CD4-positive, alpha-beta T cell (primary cell): ENCODE measurements at regions of chr16 and their contacts with region 1.

Region 1: GRCh38 chr16:53130159-53131049 is 75.6 kb downstream of the CHD9 start:
- DNase-seq: peak; percentile 86 to 97 (median 93)
- ATAC-seq: peak; percentile 91
- H3K4me3 ChIP-seq: peak overlapping the region; percentile 92
- H3K4me3 Mint-ChIP-seq: peak overlapping the region; percentile 91
- H3K27ac ChIP-seq: peak overlapping the region; percentile 63 to 71
- H3K27ac Mint-ChIP-seq: peak overlapping the region; percentile 92
- H3K4me1 ChIP-seq: peaks cover 13% of the 10 kb centered on the region
- H3K4me1 Mint-ChIP-seq: peaks cover 12% of the 10 kb centered on the region
- H3K27me3 ChIP-seq: no peaks in the 10 kb centered on the region
- H3K27me3 Mint-ChIP-seq: no peaks in the 10 kb centered on the region
- CTCF ChIP-seq: no peak

Region 2: GRCh38 chr16:53159781-53160436 is 29.5 kb after region 1 on chr16:
- CTCF ChIA-PET with region 1: no interaction called
- POLR2A ChIA-PET with region 1: no interaction called
- intact Hi-C with region 1: loop called in 1 of 2 experiments (anchors 2 kb)
- DNase-seq: peak in 4 of 14 experiments; percentile 31 to 76 (median 70)
- ATAC-seq: peak; percentile 68
- H3K4me3 ChIP-seq: no peak overlapping the region
- H3K4me3 Mint-ChIP-seq: no peak overlapping the region
- H3K27ac ChIP-seq: no peak overlapping the region
- H3K27ac Mint-ChIP-seq: no peak overlapping the region
- H3K4me1 ChIP-seq: no peaks in the 10 kb centered on the region
- H3K4me1 Mint-ChIP-seq: peaks cover 6% of the 10 kb centered on the region
- H3K27me3 ChIP-seq: no peaks in the 10 kb centered on the region
- H3K27me3 Mint-ChIP-seq: no peaks in the 10 kb centered on the region
- CTCF ChIP-seq: peak; percentile 80

Region 3: DNA sequence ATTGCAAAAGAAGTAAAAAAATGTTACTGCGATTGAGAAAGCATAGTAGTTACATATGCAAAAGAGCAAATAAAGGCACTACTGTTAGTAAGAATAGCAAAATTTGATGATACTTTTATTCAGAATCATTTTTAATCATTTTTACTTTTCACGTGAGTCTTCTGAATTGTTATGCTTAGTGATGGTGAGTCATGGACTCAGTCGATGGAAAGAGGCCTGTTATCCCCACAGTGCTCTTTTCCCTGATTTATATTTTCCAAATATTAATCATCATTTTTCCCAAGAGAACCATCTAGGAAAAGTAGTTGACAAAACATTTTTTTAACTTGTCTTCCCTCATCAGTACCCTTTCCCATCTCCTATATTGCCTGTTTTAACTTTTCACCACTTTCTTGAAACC is 105.4 kb after region 1 on chr16:
- CTCF ChIA-PET with region 1: no interaction called
- POLR2A ChIA-PET with region 1: no interaction called
- intact Hi-C with region 1: no loop called
- DNase-seq: no peak
- ATAC-seq: no peak
- H3K4me3 ChIP-seq: no peak overlapping the region
- H3K4me3 Mint-ChIP-seq: no peak overlapping the region
- H3K27ac ChIP-seq: no peak overlapping the region
- H3K27ac Mint-ChIP-seq: no peak overlapping the region
- H3K4me1 ChIP-seq: no peaks in the 10 kb centered on the region
- H3K4me1 Mint-ChIP-seq: no peaks in the 10 kb centered on the region
- H3K27me3 ChIP-seq: no peaks in the 10 kb centered on the region
- H3K27me3 Mint-ChIP-seq: no peaks in the 10 kb centered on the region
- CTCF ChIP-seq: no peak

Region 4: GRCh38 chr16:53372992-53373871 is 242.8 kb after region 1 on chr16:
- CTCF ChIA-PET with region 1: no interaction called
- POLR2A ChIA-PET with region 1: no interaction called
- intact Hi-C with region 1: loop called in 1 of 2 experiments (anchors 2 kb)
- DNase-seq: peak; percentile 65 to 94 (median 82)
- ATAC-seq: peak; percentile 96
- H3K4me3 ChIP-seq: peak overlapping the region; percentile 72
- H3K4me3 Mint-ChIP-seq: no peak overlapping the region
- H3K27ac ChIP-seq: no peak overlapping the region
- H3K27ac Mint-ChIP-seq: peak overlapping the region; percentile 59
- H3K4me1 ChIP-seq: peaks cover 13% of the 10 kb centered on the region
- H3K4me1 Mint-ChIP-seq: peaks cover 35% of the 10 kb centered on the region
- H3K27me3 ChIP-seq: no peaks in the 10 kb centered on the region
- H3K27me3 Mint-ChIP-seq: no peaks in the 10 kb centered on the region
- CTCF ChIP-seq: no peak

Region 5: GRCh38 chr16:53503270-53503923 is 373.0 kb after region 1 on chr16:
- CTCF ChIA-PET with region 1: no interaction called
- POLR2A ChIA-PET with region 1: interaction called, 3 read pairs
- intact Hi-C with region 1: loop called in 1 of 2 experiments (anchors 5 kb)
- DNase-seq: peak; percentile 97 to 100 (median 100)
- ATAC-seq: peak; percentile 88
- H3K4me3 ChIP-seq: peak overlapping the region; percentile 76
- H3K4me3 Mint-ChIP-seq: peak overlapping the region; percentile 93
- H3K27ac ChIP-seq: peak overlapping the region; percentile 76 to 84
- H3K27ac Mint-ChIP-seq: peak overlapping the region; percentile 86
- H3K4me1 ChIP-seq: peaks cover 44% of the 10 kb centered on the region
- H3K4me1 Mint-ChIP-seq: peaks cover 65% of the 10 kb centered on the region
- H3K27me3 ChIP-seq: no peaks in the 10 kb centered on the region
- H3K27me3 Mint-ChIP-seq: no peaks in the 10 kb centered on the region
- CTCF ChIP-seq: no peak

Region 6: DNA sequence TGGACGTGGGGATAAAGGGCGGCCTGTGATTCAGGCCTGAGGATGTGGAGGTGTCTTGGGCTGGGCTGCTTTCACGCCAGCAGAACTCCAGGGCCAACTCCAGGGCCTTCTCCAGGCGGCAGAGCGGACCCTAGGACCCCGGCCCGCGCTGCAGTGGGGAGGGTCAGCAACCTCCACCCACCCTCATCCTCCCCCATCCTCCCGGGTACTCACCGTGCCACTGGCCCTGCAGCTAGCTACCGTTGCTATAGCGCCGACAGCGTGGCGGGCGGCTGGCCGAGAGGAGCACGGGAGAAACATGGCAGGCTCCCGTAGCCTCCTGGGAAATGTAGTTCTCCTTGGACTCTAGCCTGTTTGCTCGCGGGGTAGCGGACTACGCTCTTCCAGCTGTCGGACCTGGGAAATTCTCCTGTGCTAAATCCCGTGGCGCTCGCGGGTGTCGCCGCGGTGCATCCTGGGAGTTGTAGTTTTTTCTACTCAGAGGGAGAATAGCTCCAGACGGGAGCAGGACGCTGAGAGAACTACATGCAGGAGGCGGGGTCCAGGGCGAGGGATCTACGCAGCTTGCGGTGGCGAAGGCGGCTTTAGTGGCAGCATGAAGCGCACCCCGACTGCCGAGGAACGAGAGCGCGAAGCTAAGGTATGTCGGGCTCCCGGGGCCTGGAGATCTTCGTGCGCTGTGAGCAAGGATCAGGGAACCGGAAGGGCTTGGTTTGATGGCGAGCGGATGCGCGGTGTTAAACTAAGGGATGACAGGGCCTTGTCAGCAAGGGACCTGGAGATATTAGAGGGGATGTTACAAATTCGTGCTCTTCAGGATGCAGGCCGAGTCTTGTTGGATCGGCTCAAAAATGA is 573.4 kb after region 1 on chr16 and contains the starts of genes FTO and RPGRIP1L:
- CTCF ChIA-PET with region 1: no interaction called
- POLR2A ChIA-PET with region 1: interaction called, 3 read pairs
- intact Hi-C with region 1: loop called in 1 of 2 experiments (anchors 5 kb)
- DNase-seq: peak; percentile 90 to 99 (median 93)
- ATAC-seq: peak; percentile 89
- H3K4me3 ChIP-seq: peak within 1 kb of the TSS; percentile 87
- H3K4me3 Mint-ChIP-seq: peak within 1 kb of the TSS; percentile 97
- H3K27ac ChIP-seq: peak within 1 kb of the TSS; percentile 53 to 63
- H3K27ac Mint-ChIP-seq: peak within 1 kb of the TSS; percentile 86
- H3K4me1 ChIP-seq: peaks cover 14% of the 10 kb centered on the region
- H3K4me1 Mint-ChIP-seq: peaks cover 37% of the 10 kb centered on the region
- H3K27me3 ChIP-seq: no peaks in the 10 kb centered on the region
- H3K27me3 Mint-ChIP-seq: no peaks in the 10 kb centered on the region
- CTCF ChIP-seq: no peak
- total RNA-seq, gene FTO: 36.3 to 37.9 TPM
- total RNA-seq, gene RPGRIP1L: 2.4 to 2.5 TPM